ENCODE measurements at regions of chr12 and their contacts with region 1.

Region 1: GRCh38 chr12:86256163-86256562 is at the start of gene MGAT4C:
- DNase-seq: no peak
- ATAC-seq: no peak
- H3K4me3 ChIP-seq: no peak within 1 kb of the TSS
- H3K27ac ChIP-seq: no peak within 1 kb of the TSS
- H3K4me1 ChIP-seq: no peaks in the 10 kb centered on the region
- H3K27me3 ChIP-seq: no peaks in the 10 kb centered on the region; the same call in 1 of the 2 replicates
- CTCF ChIP-seq: no peak
- total RNA-seq, gene MGAT4C: not detected in 2 replicates

Region 2: GRCh38 chr12:85575120-85576096 is 680.8 kb before region 1 on chr12:
- CTCF ChIA-PET with region 1: no interaction called
- POLR2A ChIA-PET with region 1: no interaction called
- intact Hi-C with region 1: no loop called
- DNase-seq: peak; percentile 81
- ATAC-seq: peak; percentile 95
- H3K4me3 ChIP-seq: no peak overlapping the region
- H3K27ac ChIP-seq: no peak overlapping the region
- H3K4me1 ChIP-seq: peaks cover 3% of the 10 kb centered on the region; the same call in 1 of the 2 replicates
- H3K27me3 ChIP-seq: no peaks in the 10 kb centered on the region
- CTCF ChIP-seq: peak; percentile 92

Region 3: DNA sequence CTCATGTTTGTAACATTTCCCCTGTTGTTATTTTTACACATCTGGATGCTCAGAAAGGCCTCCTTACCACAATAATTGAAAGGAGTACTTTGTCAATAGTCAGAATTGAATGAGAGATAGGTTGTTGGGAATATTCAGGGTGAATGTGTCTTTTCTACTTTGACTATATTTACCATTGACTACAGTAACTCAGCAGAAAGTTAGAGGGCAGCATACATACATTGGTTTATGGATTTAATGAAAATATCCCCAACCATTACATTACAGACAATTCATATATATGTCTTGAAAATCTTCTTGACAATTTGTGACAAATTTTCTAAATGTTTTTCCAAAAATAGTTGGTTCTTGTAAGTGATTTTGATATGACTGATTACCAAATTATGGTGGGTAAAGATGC is 284.4 kb before region 1 on chr12:
- CTCF ChIA-PET with region 1: no interaction called
- POLR2A ChIA-PET with region 1: no interaction called
- intact Hi-C with region 1: loop called (anchors 5 kb)
- DNase-seq: peak; percentile 9
- ATAC-seq: no peak; the same call in 1 of the 2 replicates
- H3K4me3 ChIP-seq: no peak overlapping the region
- H3K27ac ChIP-seq: no peak overlapping the region
- H3K4me1 ChIP-seq: no peaks in the 10 kb centered on the region
- H3K27me3 ChIP-seq: no peaks in the 10 kb centered on the region
- CTCF ChIP-seq: peak; percentile 61